Common myeloid progenitor, CD34-positive (primary cell): ENCODE measurements at regions of chr17 and their contacts with region 1.

Region 1: GRCh38 chr17:4004517-4005295 is 40.5 kb upstream of the ATP2A3 start:
- DNase-seq: peak; percentile 50 to 62 (median 61)
- H3K4me3 ChIP-seq: no peak overlapping the region
- H3K27ac ChIP-seq: no peak overlapping the region
- H3K4me1 ChIP-seq: peaks cover 0 to 50% (median 35%) of the 10 kb centered on the region in 4 experiments
- H3K27me3 ChIP-seq: no peaks in the 10 kb centered on the region

Region 2: DNA sequence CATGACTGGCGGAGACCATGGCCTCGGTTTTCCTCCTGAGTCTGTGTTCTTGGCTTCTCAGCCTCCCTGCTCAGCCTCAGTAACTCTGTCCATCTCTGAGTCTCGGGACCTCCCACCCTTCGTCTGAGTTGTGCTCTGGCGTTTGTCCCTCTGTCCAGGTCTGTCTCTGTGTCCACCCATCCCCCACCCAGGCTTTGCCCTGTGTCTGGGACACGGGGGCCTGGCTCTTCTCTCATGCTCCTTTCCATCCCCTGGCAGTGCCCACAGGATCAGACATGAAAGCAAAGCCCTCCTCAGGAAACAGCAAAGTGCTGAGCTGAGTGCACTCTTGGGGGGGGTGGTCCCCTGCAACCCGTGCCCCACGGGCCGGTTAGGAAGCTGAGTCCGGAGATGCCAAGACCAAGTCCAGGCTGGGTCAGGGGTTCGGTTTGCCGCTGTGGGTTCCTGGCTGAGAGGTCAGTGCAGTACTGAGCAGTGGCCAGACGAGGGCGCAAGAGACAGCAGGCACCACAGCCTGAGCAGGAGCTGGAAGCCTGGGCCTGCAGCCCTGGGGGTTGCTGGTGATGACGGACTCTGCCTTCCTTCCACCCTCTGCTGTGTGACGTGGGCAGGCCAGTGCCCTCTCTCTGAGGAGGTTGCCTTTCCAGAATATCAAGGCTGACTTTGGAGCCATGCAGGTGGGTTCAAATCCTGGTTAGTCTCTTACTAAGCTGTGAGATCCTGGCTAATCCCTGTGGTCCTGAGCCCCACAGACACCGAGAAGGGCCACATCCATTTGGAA is 91.0 kb before region 1 on chr17:
- CTCF ChIA-PET with region 1: interaction called, 30 read pairs
- POLR2A ChIA-PET with region 1: interaction called, 8 read pairs
- DNase-seq: peak; percentile 82 to 86 (median 86)
- H3K4me3 ChIP-seq: peak overlapping the region; percentile 75 to 92 (median 83)
- H3K27ac ChIP-seq: peak overlapping the region; percentile 97 to 98
- H3K4me1 ChIP-seq: peaks cover 11 to 77% (median 70%) of the 10 kb centered on the region in 4 experiments
- H3K27me3 ChIP-seq: no peaks in the 10 kb centered on the region

Region 3: DNA sequence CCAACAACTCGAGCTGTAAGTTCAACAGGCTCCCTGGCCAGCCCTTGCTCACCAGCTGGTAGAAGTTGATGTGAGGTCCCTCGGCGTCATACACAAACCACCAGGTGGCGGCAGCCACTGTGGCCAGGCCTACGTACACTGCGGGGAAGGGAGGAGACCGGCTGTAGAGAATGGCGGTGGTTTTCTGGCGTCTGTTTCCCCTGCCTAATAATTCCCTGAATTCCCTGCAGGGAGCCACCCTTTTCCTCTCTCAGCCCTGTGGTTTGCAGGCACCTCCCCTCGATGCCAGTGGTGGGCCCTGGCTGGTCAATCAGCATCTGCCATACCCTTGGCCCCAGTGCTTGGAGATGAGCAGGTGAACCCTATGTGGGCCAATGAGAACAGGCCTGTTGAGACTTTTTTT is 69.6 kb before region 1 on chr17:
- CTCF ChIA-PET with region 1: interaction called, 89 read pairs
- POLR2A ChIA-PET with region 1: no interaction called
- DNase-seq: peak; percentile 83 to 93 (median 92)
- H3K4me3 ChIP-seq: no peak overlapping the region
- H3K27ac ChIP-seq: no peak overlapping the region
- H3K4me1 ChIP-seq: peaks cover 0 to 5% (median 0%) of the 10 kb centered on the region in 4 experiments
- H3K27me3 ChIP-seq: no peaks in the 10 kb centered on the region

Region 4: GRCh38 chr17:3965118-3965803 is 39.4 kb before region 1 on chr17:
- CTCF ChIA-PET with region 1: interaction called, 40 read pairs
- POLR2A ChIA-PET with region 1: interaction called, 5 read pairs
- DNase-seq: peak; percentile 86 to 93 (median 90)
- H3K4me3 ChIP-seq: peak overlapping the region in 6 of 7 experiments; percentile 77 to 95 (median 86)
- H3K27ac ChIP-seq: peak overlapping the region in 1 of 2 experiments; percentile 75
- H3K4me1 ChIP-seq: peaks cover 8 to 72% (median 67%) of the 10 kb centered on the region in 4 experiments
- H3K27me3 ChIP-seq: no peaks in the 10 kb centered on the region

Region 5: GRCh38 chr17:3972281-3972731 is 32.4 kb before region 1 on chr17:
- CTCF ChIA-PET with region 1: interaction called, 40 read pairs
- POLR2A ChIA-PET with region 1: interaction called, 3 read pairs
- DNase-seq: peak in 2 of 3 donors; percentile 36 to 45
- H3K4me3 ChIP-seq: peak overlapping the region in 3 of 7 experiments; percentile 8 to 42 (median 34)
- H3K27ac ChIP-seq: no peak overlapping the region
- H3K4me1 ChIP-seq: peaks cover 0 to 60% (median 51%) of the 10 kb centered on the region in 4 experiments
- H3K27me3 ChIP-seq: no peaks in the 10 kb centered on the region

Region 6: GRCh38 chr17:3980381-3981014 is 24.2 kb before region 1 on chr17:
- CTCF ChIA-PET with region 1: interaction called, 11 read pairs
- POLR2A ChIA-PET with region 1: no interaction called
- DNase-seq: no peak
- H3K4me3 ChIP-seq: no peak overlapping the region
- H3K27ac ChIP-seq: no peak overlapping the region
- H3K4me1 ChIP-seq: peaks cover 0 to 24% (median 18%) of the 10 kb centered on the region in 4 experiments
- H3K27me3 ChIP-seq: no peaks in the 10 kb centered on the region

Region 7: DNA sequence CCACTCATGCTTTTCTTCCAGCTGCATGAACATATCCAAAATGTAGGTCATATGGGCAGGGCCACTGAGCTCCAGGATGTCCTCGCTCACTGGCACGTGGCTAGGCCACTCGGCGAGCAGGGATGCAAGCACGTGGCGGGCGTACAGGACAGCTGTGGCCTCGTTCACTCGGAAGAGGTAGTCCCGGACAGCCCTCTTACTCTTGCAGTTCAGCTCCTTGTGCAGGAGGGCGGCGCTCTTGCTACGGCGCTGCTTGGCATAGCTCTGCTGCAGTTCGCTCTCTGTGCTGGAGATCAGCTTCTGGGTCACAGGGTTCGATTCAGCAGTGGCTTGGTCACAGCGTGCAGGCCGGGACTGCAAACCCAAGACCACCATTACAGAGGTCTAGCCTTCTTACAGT is 12.7 kb after region 1 on chr17:
- CTCF ChIA-PET with region 1: interaction called, 12 read pairs
- POLR2A ChIA-PET with region 1: no interaction called
- DNase-seq: no peak
- H3K4me3 ChIP-seq: no peak overlapping the region
- H3K27ac ChIP-seq: no peak overlapping the region
- H3K4me1 ChIP-seq: no peaks in the 10 kb centered on the region
- H3K27me3 ChIP-seq: no peaks in the 10 kb centered on the region